PC-9 (cell line): ENCODE measurements at regions of chr12 and their contacts with region 1.

Region 1: GRCh38 chr12:32947206-32948067 is 50.9 kb upstream of the PKP2 start:
- DNase-seq: peak; percentile 14 to 50
- H3K4me3 ChIP-seq: no peak overlapping the region
- H3K27ac ChIP-seq: no peak overlapping the region
- H3K4me1 ChIP-seq: peaks cover 21% of the 10 kb centered on the region
- H3K27me3 ChIP-seq: no peaks in the 10 kb centered on the region
- CTCF ChIP-seq: peak; percentile 66

Region 2: DNA sequence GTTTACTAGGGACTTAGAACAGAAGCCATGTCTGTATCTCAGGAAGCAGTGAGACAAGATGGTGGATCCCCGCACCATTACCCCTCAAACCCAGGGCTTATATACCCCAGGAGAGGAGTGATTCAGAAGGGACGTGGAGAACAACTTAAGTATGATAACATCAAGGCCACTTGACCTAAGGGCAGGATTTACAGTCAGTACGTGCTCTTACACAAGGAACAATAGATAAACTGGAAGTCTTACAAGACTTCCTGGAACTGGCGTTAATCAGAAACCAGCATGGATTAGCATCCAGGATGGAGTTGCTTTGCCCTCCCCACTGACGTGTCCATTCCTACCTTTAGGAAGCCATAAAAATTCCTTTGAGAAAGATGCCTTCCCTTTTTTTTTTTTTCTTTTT is 1296.5 kb before region 1 on chr12:
- CTCF ChIA-PET with region 1: no interaction called
- POLR2A ChIA-PET with region 1: no interaction called
- intact Hi-C with region 1: loop called (anchors 5 kb)
- DNase-seq: no peak
- H3K4me3 ChIP-seq: no peak overlapping the region
- H3K27ac ChIP-seq: no peak overlapping the region
- H3K4me1 ChIP-seq: peaks cover 5% of the 10 kb centered on the region; the same call in 1 of the 2 replicates
- H3K27me3 ChIP-seq: no peaks in the 10 kb centered on the region
- CTCF ChIP-seq: no peak

Region 3: DNA sequence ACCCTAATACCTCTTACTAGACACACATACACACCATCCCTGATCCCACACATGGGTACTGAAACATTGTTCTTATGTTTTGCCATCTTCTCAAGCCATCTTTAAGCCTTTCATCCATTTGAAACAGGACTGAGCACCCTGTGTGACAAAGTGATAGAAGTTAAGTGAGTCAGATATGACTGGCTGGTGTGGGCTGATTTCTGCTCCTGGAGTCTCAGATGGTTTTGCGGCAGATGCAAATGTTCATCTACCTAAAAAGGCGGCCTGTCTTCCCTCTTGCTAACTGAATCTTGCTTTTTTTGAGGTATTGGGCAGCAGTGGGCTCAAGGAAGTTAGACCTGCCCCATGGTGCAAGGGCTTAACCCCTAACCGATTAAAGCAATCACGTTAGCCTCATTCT is 20.5 kb before region 1 on chr12:
- CTCF ChIA-PET with region 1: no interaction called
- POLR2A ChIA-PET with region 1: no interaction called
- intact Hi-C with region 1: no loop called
- DNase-seq: no peak
- H3K4me3 ChIP-seq: no peak overlapping the region
- H3K27ac ChIP-seq: no peak overlapping the region
- H3K4me1 ChIP-seq: peaks cover under 1% of the 10 kb centered on the region; the same call in 1 of the 2 replicates
- H3K27me3 ChIP-seq: no peaks in the 10 kb centered on the region
- CTCF ChIP-seq: no peak

Region 4: DNA sequence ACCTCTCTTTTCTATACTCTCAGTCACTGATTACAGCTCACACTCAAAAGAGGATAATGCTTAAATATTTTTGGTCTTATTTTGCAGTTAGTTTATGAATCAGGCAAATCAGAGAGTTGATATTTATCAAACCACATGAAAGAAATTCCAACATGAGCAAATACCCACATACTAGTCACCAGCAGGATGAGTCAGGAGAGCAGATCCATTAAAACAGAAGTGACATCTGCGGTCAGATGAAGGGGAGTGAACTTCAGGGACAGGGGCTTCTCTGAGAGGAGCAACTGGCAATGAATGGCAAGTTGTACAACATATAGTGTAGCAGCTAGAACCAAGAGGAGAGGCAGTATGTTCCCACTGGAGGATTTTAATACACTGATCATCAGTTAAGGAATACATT is 233.5 kb after region 1 on chr12:
- CTCF ChIA-PET with region 1: no interaction called
- POLR2A ChIA-PET with region 1: interaction called, 3 read pairs
- intact Hi-C with region 1: loop called (anchors 5 kb)
- DNase-seq: peak; percentile 48 to 90
- H3K4me3 ChIP-seq: no peak overlapping the region
- H3K27ac ChIP-seq: no peak overlapping the region
- H3K4me1 ChIP-seq: peaks cover 25% of the 10 kb centered on the region
- H3K27me3 ChIP-seq: no peaks in the 10 kb centered on the region
- CTCF ChIP-seq: no peak

Region 5: GRCh38 chr12:33514893-33515292 is 567.5 kb after region 1 on chr12:
- CTCF ChIA-PET with region 1: no interaction called
- POLR2A ChIA-PET with region 1: no interaction called
- intact Hi-C with region 1: loop called (anchors 5 kb)
- DNase-seq: no peak
- H3K4me3 ChIP-seq: no peak overlapping the region
- H3K27ac ChIP-seq: no peak overlapping the region
- H3K4me1 ChIP-seq: peaks cover under 1% of the 10 kb centered on the region; the same call in 1 of the 2 replicates
- H3K27me3 ChIP-seq: no peaks in the 10 kb centered on the region
- CTCF ChIP-seq: no peak

Region 6: GRCh38 chr12:34022079-34022830 is 1074.8 kb after region 1 on chr12 and contains the start of gene ALG10:
- CTCF ChIA-PET with region 1: interaction called, 7 read pairs
- POLR2A ChIA-PET with region 1: no interaction called
- intact Hi-C with region 1: loop called (anchors 1 kb)
- DNase-seq: peak; percentile 93 to 99
- H3K4me3 ChIP-seq: peak within 1 kb of the TSS; percentile 76
- H3K27ac ChIP-seq: peak within 1 kb of the TSS; percentile 49
- H3K4me1 ChIP-seq: peaks cover 19% of the 10 kb centered on the region
- H3K27me3 ChIP-seq: no peaks in the 10 kb centered on the region
- CTCF ChIP-seq: peak; percentile 86
- total RNA-seq, gene ALG10: 21.5 and 23.3 TPM in 2 replicates